Aorta (tissue), 5 donors: ENCODE measurements at regions of chr2 and their contacts with region 1.

Region 1: DNA sequence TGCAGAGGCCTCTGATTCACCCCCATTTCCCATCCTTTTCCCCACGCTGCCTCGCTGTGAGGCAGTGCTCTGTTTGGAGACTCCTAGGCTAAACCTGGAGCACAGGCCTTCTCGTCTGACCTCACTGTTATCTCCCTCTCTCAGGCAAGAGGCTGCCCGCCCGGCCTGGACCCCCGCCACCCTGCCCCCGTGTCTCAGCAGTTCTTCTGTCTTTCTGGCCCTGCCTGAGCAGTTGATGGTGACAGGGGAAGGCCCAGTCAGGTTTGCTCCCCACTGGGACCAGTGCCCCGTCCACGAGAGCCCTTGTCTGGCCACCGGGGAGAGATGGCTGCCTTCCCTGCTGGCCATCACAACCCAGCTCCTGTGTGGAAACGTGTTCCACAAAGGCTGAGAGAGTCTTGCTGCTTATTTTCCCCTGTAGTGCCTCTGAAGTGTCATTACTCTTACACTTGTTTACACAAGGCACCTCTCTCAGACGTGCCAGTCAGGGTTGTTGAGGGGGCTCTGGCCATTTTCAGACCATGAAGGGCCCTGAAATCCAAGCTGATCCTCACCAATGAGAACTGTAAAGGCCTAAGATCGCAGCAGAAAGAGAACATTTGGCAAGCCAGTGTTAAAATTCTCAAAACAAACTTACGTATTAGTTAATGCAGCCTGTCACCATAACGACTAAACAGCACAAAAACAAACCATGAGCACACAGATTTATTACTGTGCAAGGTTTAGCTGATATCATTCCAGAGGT is 210.9 kb downstream of the NDUFA10 start:
- DNase-seq: peak; percentile 44 to 81
- ATAC-seq: peak; percentile 75
- H3K4me3 ChIP-seq: no peak overlapping the region
- H3K27ac ChIP-seq: peak overlapping the region; percentile 94 to 100
- H3K4me1 ChIP-seq: no peaks in the 10 kb centered on the region
- H3K27me3 ChIP-seq: no peaks in the 10 kb centered on the region

Region 2: GRCh38 chr2:239586651-239587310 is 227.5 kb before region 1 on chr2:
- intact Hi-C with region 1: no loop called
- DNase-seq: peak; percentile 32 to 63
- ATAC-seq: no peak
- H3K4me3 ChIP-seq: no peak overlapping the region
- H3K27ac ChIP-seq: no peak overlapping the region
- H3K4me1 ChIP-seq: no peaks in the 10 kb centered on the region
- H3K27me3 ChIP-seq: no peaks in the 10 kb centered on the region

Region 3: GRCh38 chr2:239756790-239757760 is 57.2 kb before region 1 on chr2:
- intact Hi-C with region 1: loop called (anchors 1 to 5 kb)
- DNase-seq: no peak
- ATAC-seq: peak; percentile 65
- H3K4me3 ChIP-seq: no peak overlapping the region
- H3K27ac ChIP-seq: peak overlapping the region; percentile 58 to 95
- H3K4me1 ChIP-seq: no peaks in the 10 kb centered on the region
- H3K27me3 ChIP-seq: no peaks in the 10 kb centered on the region

Region 4: DNA sequence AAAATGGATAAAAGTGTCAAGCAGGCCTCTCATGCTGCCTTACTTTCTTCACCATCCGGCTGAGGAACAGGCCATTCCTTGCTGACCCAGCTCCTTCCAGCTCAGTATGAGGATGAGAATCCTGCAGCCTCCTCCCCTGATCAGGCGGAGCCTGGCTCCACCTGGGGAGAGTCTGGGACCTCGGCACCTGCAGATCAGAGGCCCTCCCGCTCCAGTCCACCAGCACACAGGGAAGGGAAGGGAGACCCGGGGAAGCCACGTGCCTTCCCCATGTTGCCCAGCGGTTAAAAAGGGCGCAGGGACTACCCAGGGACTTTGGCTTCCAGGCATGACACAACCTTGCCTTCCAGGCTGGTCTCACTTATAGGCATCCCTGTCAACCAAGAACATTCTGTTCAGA is 38.8 kb after region 1 on chr2:
- intact Hi-C with region 1: no loop called
- DNase-seq: no peak
- ATAC-seq: no peak
- H3K4me3 ChIP-seq: no peak overlapping the region
- H3K27ac ChIP-seq: no peak overlapping the region
- H3K4me1 ChIP-seq: no peaks in the 10 kb centered on the region
- H3K27me3 ChIP-seq: no peaks in the 10 kb centered on the region

Region 5: DNA sequence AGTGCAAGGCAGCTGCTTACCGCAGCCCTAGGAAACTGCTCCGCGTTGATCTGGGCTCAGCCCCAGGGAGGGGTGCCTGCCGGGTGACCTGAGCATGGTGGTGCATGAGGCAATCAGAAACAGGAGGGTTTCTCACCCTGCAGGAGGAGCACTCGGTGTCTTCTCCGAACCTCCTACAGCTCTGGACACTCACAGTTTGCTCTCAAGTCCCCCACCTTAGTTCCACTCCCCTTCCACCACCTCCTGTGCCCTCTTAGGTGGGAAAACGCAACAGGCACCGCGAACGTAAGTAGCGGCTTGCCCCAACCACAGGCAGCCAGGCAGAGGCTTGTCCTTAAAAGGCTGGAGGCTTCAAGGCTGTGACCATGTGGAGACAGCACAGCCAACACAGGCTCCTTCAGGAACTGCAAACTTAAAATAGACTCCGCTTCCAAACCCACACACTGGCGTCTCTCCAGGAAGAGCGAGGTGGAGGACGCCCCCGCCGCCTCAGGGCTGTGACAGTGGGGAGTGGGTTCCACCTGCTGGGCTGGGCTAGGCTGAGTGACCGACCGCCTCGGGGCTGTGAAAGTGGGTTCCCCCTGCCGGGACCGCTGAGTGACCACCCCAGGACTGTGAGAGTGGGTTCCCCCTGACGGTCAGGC is 139.3 kb after region 1 on chr2:
- intact Hi-C with region 1: loop called in 1 of 2 experiments (anchors 10 kb)
- DNase-seq: peak; percentile 71 to 86
- ATAC-seq: peak; percentile 83
- H3K4me3 ChIP-seq: no peak overlapping the region
- H3K27ac ChIP-seq: peak overlapping the region; percentile 58 to 61
- H3K4me1 ChIP-seq: peaks cover 0 to 1% of the 10 kb centered on the region in 2 donors
- H3K27me3 ChIP-seq: no peaks in the 10 kb centered on the region